ENCODE measurements at regions of chr21 and their contacts with region 1.

Region 1: GRCh38 chr21:43775795-43776430 is at the start of gene CSTB:
- DNase-seq: peak; percentile 94
- total RNA-seq, gene CSTB: 34.6 TPM

Region 2: GRCh38 chr21:43703035-43703880 is 72.7 kb before region 1 on chr21:
- intact Hi-C with region 1: loop called (anchors 10 kb)
- DNase-seq: no peak

Region 3: GRCh38 chr21:43805275-43805800 is 29.4 kb after region 1 on chr21:
- intact Hi-C with region 1: no loop called
- DNase-seq: no peak

Measured in cardiac septum (tissue), 1 donor.